ENCODE measurements at regions of chr10 and their contacts with region 1.

Region 1: GRCh38 chr10:19654576-19654975 is 161.7 kb upstream of the PLXDC2 start:
- DNase-seq: no peak
- H3K4me3 ChIP-seq: no peak overlapping the region
- H3K27ac ChIP-seq: no peak overlapping the region
- H3K4me1 ChIP-seq: no peaks in the 10 kb centered on the region
- H3K27me3 ChIP-seq: no peaks in the 10 kb centered on the region
- CTCF ChIP-seq: no peak
- POLR2A ChIP-seq: no peak

Region 2: DNA sequence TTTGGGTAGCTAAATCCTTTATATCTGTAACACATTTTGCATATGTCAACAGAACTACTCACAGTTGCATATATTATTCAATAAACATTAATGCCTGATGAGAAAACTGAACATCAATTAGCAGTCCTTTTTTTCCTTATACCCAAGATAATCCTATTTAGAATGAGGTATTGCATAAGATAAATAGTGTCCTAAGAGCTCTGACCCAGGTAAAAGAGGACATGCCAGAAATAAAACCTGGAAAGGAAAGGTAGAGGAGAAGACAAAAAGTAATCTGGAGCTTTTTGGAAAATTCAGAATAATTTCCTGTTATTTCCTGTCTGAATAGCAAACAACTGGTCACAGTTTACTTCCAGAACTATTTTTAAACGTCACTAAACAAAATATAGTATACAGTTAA is 366.1 kb after region 1 on chr10:
- intact Hi-C with region 1: loop called (anchors 5 kb)
- DNase-seq: no peak
- H3K4me3 ChIP-seq: no peak overlapping the region
- H3K27ac ChIP-seq: no peak overlapping the region
- H3K4me1 ChIP-seq: no peaks in the 10 kb centered on the region
- H3K27me3 ChIP-seq: no peaks in the 10 kb centered on the region
- CTCF ChIP-seq: no peak
- POLR2A ChIP-seq: no peak

Measured in breast epithelium (tissue), 4 donors.